Spleen (tissue), 13 donors: ENCODE measurements at regions of chr1 and their contacts with region 1.

Region 1: GRCh38 chr1:111507411-111508201 is 4.2 kb upstream of the ADORA3 start:
- DNase-seq: peak; percentile 96
- H3K4me3 ChIP-seq: peak overlapping the region in 7 of 8 donors; percentile 2 to 65 (median 21)
- H3K27ac ChIP-seq: peak overlapping the region; percentile 91 to 99 (median 98)
- H3K4me1 ChIP-seq: peaks cover 47 to 100% (median 85%) of the 10 kb centered on the region in 6 donors
- H3K27me3 ChIP-seq: no peaks in the 10 kb centered on the region
- CTCF ChIP-seq: peak in 1 of 11 experiments; percentile 4
- POLR2A ChIP-seq: no peak

Region 2: GRCh38 chr1:111346089-111346885 is 161.3 kb before region 1 on chr1:
- intact Hi-C with region 1: no loop called
- DNase-seq: peak; percentile 96
- H3K4me3 ChIP-seq: peak overlapping the region; percentile 43 to 72 (median 52)
- H3K27ac ChIP-seq: peak overlapping the region; percentile 48 to 77 (median 72)
- H3K4me1 ChIP-seq: peaks cover 0 to 16% (median 11%) of the 10 kb centered on the region in 6 donors
- H3K27me3 ChIP-seq: no peaks in the 10 kb centered on the region
- CTCF ChIP-seq: peak in 6 of 11 experiments; percentile 12 to 32 (median 22)
- POLR2A ChIP-seq: peak in 1 of 3 donors; percentile 29

Region 3: DNA sequence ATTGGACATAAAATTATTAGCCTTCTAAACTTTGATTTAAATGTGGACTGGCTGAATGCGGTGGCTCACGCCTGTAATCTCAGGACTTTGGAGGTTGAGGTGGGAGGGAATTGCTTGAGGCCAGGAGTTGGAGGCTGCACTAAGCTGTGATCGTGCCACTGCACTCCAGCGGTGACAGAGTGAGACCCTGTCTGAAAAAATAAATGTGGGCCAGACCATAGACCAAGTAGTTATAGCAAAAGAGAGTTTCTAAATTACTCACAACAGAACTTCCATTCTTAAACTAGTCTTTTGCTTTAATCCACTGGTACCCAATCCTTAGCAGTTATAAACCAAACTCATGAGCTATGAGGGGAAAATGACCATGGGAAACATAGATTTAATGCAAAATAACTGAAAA is 147.2 kb after region 1 on chr1:
- intact Hi-C with region 1: loop called (anchors 5 kb)
- DNase-seq: no peak
- H3K4me3 ChIP-seq: no peak overlapping the region
- H3K27ac ChIP-seq: peak overlapping the region in 3 of 8 donors; percentile 1 to 70 (median 57)
- H3K4me1 ChIP-seq: peaks cover 23 to 93% (median 73%) of the 10 kb centered on the region in 6 donors
- H3K27me3 ChIP-seq: no peaks in the 10 kb centered on the region
- CTCF ChIP-seq: no peak
- POLR2A ChIP-seq: no peak

Region 4: GRCh38 chr1:111755331-111756123 is 247.9 kb after region 1 on chr1 and contains the start of gene DDX20:
- intact Hi-C with region 1: loop called (anchors 10 kb)
- DNase-seq: peak; percentile 99
- H3K4me3 ChIP-seq: peak within 1 kb of the TSS; percentile 67 to 96 (median 81)
- H3K27ac ChIP-seq: peak within 1 kb of the TSS; percentile 87 to 97 (median 95)
- H3K4me1 ChIP-seq: peaks cover 14 to 42% (median 24%) of the 10 kb centered on the region in 6 donors
- H3K27me3 ChIP-seq: no peaks in the 10 kb centered on the region
- CTCF ChIP-seq: peak; percentile 87 to 98 (median 94)
- POLR2A ChIP-seq: peak in 2 of 3 donors; percentile 26 to 52
- total RNA-seq, gene DDX20: 12.2 to 40.3 (median 16.1) TPM

Region 5: DNA sequence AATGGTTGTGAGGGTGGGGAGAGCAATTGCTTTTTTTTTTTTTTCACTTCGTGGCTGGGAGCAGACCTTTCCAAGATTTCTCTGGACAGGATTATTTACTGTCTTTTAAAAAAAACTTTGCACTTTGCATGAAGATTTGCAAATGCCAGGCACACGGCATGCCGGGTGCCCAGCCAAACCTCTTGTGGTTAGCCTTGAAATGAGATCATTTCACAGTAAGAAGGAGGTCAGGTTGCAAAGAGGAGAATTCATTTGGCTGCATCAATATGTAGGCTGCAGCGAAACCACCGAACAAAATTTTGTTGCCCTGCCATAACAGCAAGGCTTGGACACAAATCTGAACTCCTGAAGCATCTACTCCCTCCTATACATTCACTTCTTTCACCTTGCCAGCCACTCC is 518.4 kb after region 1 on chr1:
- intact Hi-C with region 1: no loop called
- DNase-seq: no peak
- H3K4me3 ChIP-seq: no peak overlapping the region
- H3K27ac ChIP-seq: peak overlapping the region in 2 of 8 donors; percentile 22 to 48
- H3K4me1 ChIP-seq: peaks cover 0 to 16% (median 4%) of the 10 kb centered on the region in 6 donors
- H3K27me3 ChIP-seq: peaks cover 0 to 3% (median 0%) of the 10 kb centered on the region in 7 donors
- CTCF ChIP-seq: no peak
- POLR2A ChIP-seq: no peak